K562 (cell line): ENCODE measurements at regions of chr19 and their contacts with region 1.

Region 1: DNA sequence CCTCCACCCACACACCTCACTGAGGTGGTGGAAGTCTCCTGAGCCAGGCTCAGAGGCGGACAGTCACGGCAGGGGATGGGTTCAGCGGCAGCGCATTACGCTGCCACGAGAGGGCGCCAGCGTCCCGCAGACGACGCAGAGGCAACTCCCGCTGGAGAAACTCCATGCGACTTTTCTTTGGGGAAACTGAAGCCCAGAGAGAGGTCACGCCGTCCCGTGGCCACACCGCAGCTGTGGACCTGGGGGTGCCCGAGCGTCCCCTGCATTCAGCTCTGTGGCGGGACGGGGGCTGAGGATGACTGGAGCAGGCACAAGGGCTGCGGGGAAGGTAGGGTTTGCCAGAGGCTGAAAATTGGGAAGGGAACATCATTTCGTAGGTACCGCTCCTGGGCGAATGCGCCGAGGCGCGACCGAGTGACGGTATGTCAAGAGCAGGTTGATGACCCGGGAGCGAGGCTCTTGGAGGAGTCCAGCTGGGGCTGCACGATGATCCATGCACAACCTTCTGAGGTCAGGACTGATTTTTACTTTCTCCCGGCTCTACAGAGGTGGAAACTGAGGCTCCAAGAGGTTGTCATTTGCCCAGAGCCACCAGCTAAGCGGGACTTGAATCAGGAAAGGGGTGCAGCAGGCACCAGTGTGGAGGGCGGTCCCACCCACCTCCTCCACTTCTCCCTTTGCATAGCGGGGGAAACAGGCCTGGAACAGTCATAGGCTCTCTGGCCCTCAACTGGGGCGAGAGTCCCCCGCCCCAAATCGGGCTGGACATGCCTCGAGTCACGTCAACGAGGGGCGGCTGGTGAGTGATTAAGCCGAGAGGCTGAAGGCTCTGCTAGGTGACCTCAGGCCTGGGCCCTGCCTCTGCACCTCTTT is 690 bp upstream of the ARRDC2 start:
- DNase-seq: peak; percentile 79 to 91 (median 84)
- ATAC-seq: peak; percentile 98
- H3K4me3 ChIP-seq: peak overlapping the region; percentile 27
- H3K27ac ChIP-seq: peak overlapping the region; percentile 43
- H3K4me1 ChIP-seq: peaks cover 10 to 38% of the 10 kb centered on the region in 2 experiments; a peak in 4 of 5 replicates
- H3K27me3 ChIP-seq: no peaks in the 10 kb centered on the region
- CTCF ChIP-seq: peak; percentile 93 to 97 (median 96)
- EP300 ChIP-seq: no peak; the same call in 1 of the 2 replicates
- POLR2A ChIP-seq: no peak
- RAD21 ChIP-seq: peak; percentile 95

Region 2: GRCh38 chr19:18058208-18059030 is 51.1 kb after region 1 on chr19:
- CTCF ChIA-PET with region 1: interaction called, 59 read pairs
- POLR2A ChIA-PET with region 1: no interaction called
- in situ Hi-C with region 1: no loop called
- intact Hi-C with region 1: loop called (anchors 1 kb)
- DNase-seq: peak; percentile 85 to 88 (median 86)
- ATAC-seq: peak; percentile 95
- H3K4me3 ChIP-seq: peak overlapping the region; percentile 22
- H3K27ac ChIP-seq: peak overlapping the region; percentile 67; the same call in 2 of the 3 replicates
- H3K4me1 ChIP-seq: peaks cover 3 to 13% of the 10 kb centered on the region in 2 experiments; a peak in 4 of 5 replicates
- H3K27me3 ChIP-seq: no peaks in the 10 kb centered on the region
- CTCF ChIP-seq: peak; percentile 84 to 92 (median 85)
- EP300 ChIP-seq: no peak
- POLR2A ChIP-seq: no peak
- RAD21 ChIP-seq: peak; percentile 96 to 97

Region 3: DNA sequence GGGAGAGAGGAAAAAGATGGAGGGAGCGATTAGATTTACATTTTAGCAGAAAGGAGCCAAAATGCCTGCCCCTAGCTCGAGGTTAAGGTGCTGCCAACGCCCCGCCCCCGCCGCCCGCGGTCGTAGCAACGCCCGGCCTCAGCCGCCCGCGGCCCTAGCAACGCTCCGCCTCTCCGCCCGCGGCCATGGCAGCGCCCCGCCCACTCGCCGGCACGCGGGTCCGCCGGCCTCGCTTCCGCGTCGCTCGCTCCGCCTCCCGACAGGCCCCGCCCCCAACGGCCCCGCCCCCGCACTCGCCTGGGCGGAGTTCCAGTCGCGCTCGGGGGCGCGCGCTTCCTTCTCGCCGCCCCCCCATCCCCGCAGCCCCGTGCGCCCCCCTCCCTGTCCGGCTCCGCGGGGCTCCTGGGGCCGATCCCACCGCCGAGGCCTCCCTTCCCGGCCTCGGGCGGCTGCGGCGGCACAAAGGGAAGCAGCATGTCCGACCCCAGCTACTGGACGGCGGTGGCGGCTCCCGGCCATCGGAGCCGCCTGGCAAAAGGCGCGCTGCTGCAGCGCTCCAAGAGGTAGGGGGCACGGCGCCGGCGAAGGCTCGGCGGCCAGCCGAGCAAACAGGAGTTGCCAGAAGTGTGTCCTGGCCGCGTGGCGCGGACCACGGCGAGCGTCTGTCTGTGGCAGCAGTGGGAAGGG is 110.6 kb after region 1 on chr19:
- CTCF ChIA-PET with region 1: no interaction called
- POLR2A ChIA-PET with region 1: no interaction called
- in situ Hi-C with region 1: no loop called
- intact Hi-C with region 1: loop called (anchors 5 kb)
- DNase-seq: peak; percentile 93 to 99 (median 98)
- ATAC-seq: peak; percentile 94
- H3K4me3 ChIP-seq: peak overlapping the region; percentile 82
- H3K27ac ChIP-seq: peak overlapping the region; percentile 76
- H3K4me1 ChIP-seq: peaks cover 13 to 25% of the 10 kb centered on the region in 2 experiments; a peak in 4 of 5 replicates
- H3K27me3 ChIP-seq: no peaks in the 10 kb centered on the region
- CTCF ChIP-seq: 0 out of 6 replicates have a peak, but pooled peaks of 1 of the 3 experiments have one; percentile 1
- EP300 ChIP-seq: no peak
- POLR2A ChIP-seq: peak; percentile 35; the same call in 1 of the 2 replicates
- RAD21 ChIP-seq: no peak

Region 4: GRCh38 chr19:18160971-18161635 is 153.8 kb after region 1 on chr19:
- CTCF ChIA-PET with region 1: no interaction called
- POLR2A ChIA-PET with region 1: interaction called, 3 read pairs
- in situ Hi-C with region 1: loop called (anchors 10 kb)
- intact Hi-C with region 1: loop called (anchors 10 kb)
- DNase-seq: peak; percentile 85 to 95 (median 95)
- ATAC-seq: peak; percentile 85
- H3K4me3 ChIP-seq: peak overlapping the region; percentile 40
- H3K27ac ChIP-seq: peak overlapping the region; percentile 84
- H3K4me1 ChIP-seq: peaks cover 32 to 50% of the 10 kb centered on the region in 2 experiments
- H3K27me3 ChIP-seq: no peaks in the 10 kb centered on the region
- CTCF ChIP-seq: peak; percentile 15 to 96 (median 88); a peak in 4 of 6 replicates
- EP300 ChIP-seq: no peak
- POLR2A ChIP-seq: no peak; the same call in none of the 2 replicates
- RAD21 ChIP-seq: peak in 1 of 2 experiments; percentile 65; a peak in 2 of 4 replicates